Activated T-helper 1 cell treated with anti-CD3 and anti-CD28 coated beads, Interleukin-12 subunit alpha, Interleukin-12 subunit beta, Interleukin-2, Interleukin-4 antibody, amounts not matched to agents 30 ng/mL and 10 ng/mL and 1 ng/mL, durations not matched to agents 14 hours and 24 hours and 36 hours (primary cell): ENCODE measurements at regions of chr4 and their contacts with region 1.

Region 1: DNA sequence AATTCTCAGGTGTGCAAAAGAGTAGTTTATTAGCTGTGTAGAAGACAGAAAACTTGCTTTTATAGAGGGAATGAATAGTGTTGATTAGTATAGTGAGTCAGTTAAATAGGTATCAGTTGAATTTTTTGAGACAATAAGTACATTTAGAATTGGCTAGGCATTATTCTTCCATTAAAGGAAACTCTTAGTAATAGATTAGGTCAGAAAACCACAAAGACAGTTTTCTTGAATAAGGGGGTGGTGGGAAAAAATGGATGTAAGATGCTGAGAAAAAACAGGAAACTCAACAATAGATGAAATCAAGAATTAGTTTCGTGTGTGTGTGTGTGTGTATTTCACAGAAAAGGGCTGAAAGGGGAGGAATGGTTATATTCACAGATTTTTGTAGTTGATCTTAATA is 16.8 kb downstream of the CD38 start:
- DNase-seq: no peak
- H3K4me3 Mint-ChIP-seq: peak overlapping the region; percentile 23
- H3K27ac Mint-ChIP-seq: peak overlapping the region; percentile 92
- H3K4me1 Mint-ChIP-seq: peaks cover 73% of the 10 kb centered on the region
- H3K27me3 Mint-ChIP-seq: no peaks in the 10 kb centered on the region

Region 2: GRCh38 chr4:15054541-15054940 is 740.4 kb before region 1 on chr4:
- intact Hi-C with region 1: no loop called
- DNase-seq: no peak
- H3K4me3 Mint-ChIP-seq: no peak overlapping the region
- H3K27ac Mint-ChIP-seq: no peak overlapping the region
- H3K4me1 Mint-ChIP-seq: no peaks in the 10 kb centered on the region
- H3K27me3 Mint-ChIP-seq: no peaks in the 10 kb centered on the region

Region 3: GRCh38 chr4:15681207-15682015 is 113.5 kb before region 1 on chr4 and contains the start of gene FAM200B:
- intact Hi-C with region 1: loop called (anchors 5 kb)
- DNase-seq: peak; percentile 97
- H3K4me3 Mint-ChIP-seq: peak within 1 kb of the TSS; percentile 97
- H3K27ac Mint-ChIP-seq: peak within 1 kb of the TSS; percentile 94
- H3K4me1 Mint-ChIP-seq: peaks cover 45% of the 10 kb centered on the region
- H3K27me3 Mint-ChIP-seq: no peaks in the 10 kb centered on the region
- total RNA-seq, gene FAM200B: 5.5 and 6.6 TPM in 2 replicates

Region 4: GRCh38 chr4:15738877-15739276 is 56.0 kb before region 1 on chr4:
- intact Hi-C with region 1: loop called (anchors 1 kb)
- DNase-seq: no peak
- H3K4me3 Mint-ChIP-seq: peak overlapping the region; percentile 35
- H3K27ac Mint-ChIP-seq: peak overlapping the region; percentile 85
- H3K4me1 Mint-ChIP-seq: peaks cover 51% of the 10 kb centered on the region
- H3K27me3 Mint-ChIP-seq: no peaks in the 10 kb centered on the region

Region 5: GRCh38 chr4:15778289-15779241 is 16.3 kb before region 1 on chr4 and contains the start of gene CD38:
- intact Hi-C with region 1: loop called (anchors 1 kb)
- DNase-seq: peak; percentile 64
- H3K4me3 Mint-ChIP-seq: peak within 1 kb of the TSS; percentile 93
- H3K27ac Mint-ChIP-seq: peak within 1 kb of the TSS; percentile 92
- H3K4me1 Mint-ChIP-seq: peaks cover 86% of the 10 kb centered on the region
- H3K27me3 Mint-ChIP-seq: no peaks in the 10 kb centered on the region
- total RNA-seq, gene CD38: 148 and 152 TPM in 2 replicates

Region 6: DNA sequence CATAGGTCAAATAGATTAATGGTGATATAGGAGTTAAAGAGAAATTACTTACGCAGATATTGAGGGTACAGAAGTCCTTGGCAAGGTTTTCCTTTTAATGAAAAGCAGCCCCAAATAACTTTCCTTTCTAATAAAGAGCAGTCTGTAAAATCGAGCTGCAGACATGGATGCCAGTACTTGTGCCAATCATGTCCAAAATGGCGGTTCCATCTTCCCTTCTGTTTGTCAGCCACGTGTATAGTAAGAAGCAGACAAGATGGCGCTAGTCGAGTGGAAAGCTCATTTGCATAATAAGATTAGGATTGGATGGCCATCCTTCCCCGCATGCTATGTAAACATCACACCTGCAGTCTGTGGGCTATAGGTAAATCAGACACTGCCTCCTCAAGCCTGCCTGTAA is 75.2 kb after region 1 on chr4:
- intact Hi-C with region 1: loop called (anchors 2 kb)
- DNase-seq: no peak
- H3K4me3 Mint-ChIP-seq: no peak overlapping the region
- H3K27ac Mint-ChIP-seq: no peak overlapping the region
- H3K4me1 Mint-ChIP-seq: no peaks in the 10 kb centered on the region
- H3K27me3 Mint-ChIP-seq: peaks cover 5% of the 10 kb centered on the region

Region 7: GRCh38 chr4:17336524-17336961 is 1541.6 kb after region 1 on chr4:
- intact Hi-C with region 1: loop called (anchors 5 kb)
- DNase-seq: peak; percentile 77
- H3K4me3 Mint-ChIP-seq: peak overlapping the region; percentile 47
- H3K27ac Mint-ChIP-seq: peak overlapping the region; percentile 87
- H3K4me1 Mint-ChIP-seq: peaks cover 43% of the 10 kb centered on the region
- H3K27me3 Mint-ChIP-seq: peaks cover 6% of the 10 kb centered on the region